BJ (cell line): ENCODE measurements at regions of chr19 and their contacts with region 1.

Region 1: DNA sequence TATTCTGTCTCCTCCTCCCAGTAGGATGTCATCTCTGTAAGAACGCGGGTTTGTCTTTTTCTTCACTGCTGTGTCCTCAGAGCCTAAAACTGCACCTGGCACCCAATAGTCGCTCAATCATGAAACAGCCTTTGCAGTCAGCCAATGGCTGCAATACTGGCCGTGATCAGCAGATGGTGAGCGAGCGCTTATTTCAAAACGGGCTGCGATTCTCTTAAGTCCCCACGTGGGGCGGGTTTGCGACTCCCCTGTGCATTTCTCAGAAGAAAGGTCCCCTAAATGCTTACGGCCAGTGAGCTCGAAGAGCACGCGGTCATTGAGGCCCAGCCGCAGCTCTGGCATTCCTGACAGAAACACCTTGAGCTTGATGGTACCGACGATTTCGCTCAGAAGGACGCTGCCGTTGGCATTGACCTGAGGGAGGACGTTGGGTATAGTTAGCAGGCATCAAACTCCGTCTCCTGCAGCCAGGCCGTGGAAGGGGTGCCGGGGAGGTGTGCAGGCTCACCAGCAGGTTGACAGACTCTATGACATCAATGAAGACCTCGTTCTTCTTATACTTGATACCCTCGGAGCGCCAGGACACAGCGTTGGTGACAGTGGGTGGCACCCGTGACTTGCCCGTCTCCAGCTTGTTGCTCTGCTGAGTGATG is 6.0 kb downstream of the AP1M2 start:
- DNase-seq: peak; percentile 46
- H3K4me3 ChIP-seq: no peak overlapping the region
- H3K27me3 ChIP-seq: no peaks in the 10 kb centered on the region
- CTCF ChIP-seq: peak; percentile 97

Region 2: GRCh38 chr19:10565567-10566407 is 15.3 kb before region 1 on chr19 and contains the start of gene KRI1:
- CTCF ChIA-PET with region 1: interaction called, 10 read pairs
- POLR2A ChIA-PET with region 1: no interaction called
- DNase-seq: peak; percentile 84
- H3K4me3 ChIP-seq: peak within 1 kb of the TSS; percentile 99
- H3K27me3 ChIP-seq: no peaks in the 10 kb centered on the region
- CTCF ChIP-seq: peak; percentile 27
- polyA plus RNA-seq, gene KRI1: 8.4 and 10.0 TPM in 2 replicates

Region 3: DNA sequence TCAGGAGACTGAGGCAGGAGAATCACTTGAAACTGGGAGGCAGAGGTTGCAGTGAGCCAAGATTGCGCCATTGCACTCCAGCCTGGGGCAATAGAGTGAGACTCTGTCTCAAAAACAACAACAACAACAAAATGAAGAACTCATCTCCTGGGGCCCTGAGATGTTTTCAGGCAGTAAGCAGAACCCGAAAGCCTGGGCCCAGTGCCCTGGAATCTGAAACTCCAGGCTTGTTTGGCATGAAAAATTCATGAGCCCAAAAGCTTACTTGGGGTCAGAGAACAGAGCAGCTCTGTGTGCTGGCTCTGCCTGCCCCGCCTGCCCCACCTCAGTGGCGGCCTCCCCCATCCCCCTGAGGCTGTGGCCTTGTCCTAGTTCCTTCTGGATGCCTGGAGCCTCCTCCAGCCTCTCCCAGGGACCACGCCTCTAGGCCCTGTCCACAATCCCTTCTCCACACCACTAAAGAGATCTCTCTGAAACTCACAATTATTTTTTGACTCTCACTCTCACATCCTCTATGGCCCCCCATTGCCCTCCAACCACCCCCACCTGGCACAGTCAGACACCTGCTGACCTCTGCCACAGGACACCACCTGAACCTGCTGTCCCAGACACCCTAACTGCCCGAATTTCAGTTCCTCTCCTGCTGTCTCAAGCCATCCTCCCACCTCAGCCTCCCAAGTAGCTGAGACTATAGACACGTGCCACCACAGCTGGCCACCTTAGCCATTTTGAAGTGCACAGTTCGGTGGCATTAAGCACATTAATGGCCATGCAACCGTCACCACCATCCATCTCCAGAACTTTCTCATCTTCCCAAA is 12.9 kb after region 1 on chr19:
- CTCF ChIA-PET with region 1: interaction called, 54 read pairs
- POLR2A ChIA-PET with region 1: no interaction called
- DNase-seq: no peak
- H3K4me3 ChIP-seq: no peak overlapping the region
- H3K27me3 ChIP-seq: no peaks in the 10 kb centered on the region; the same call in 1 of the 2 replicates
- CTCF ChIP-seq: no peak

Region 4: GRCh38 chr19:10618846-10619245 is 37.7 kb after region 1 on chr19:
- CTCF ChIA-PET with region 1: interaction called, 14 read pairs
- POLR2A ChIA-PET with region 1: no interaction called
- DNase-seq: no peak
- H3K4me3 ChIP-seq: no peak overlapping the region
- H3K27me3 ChIP-seq: no peaks in the 10 kb centered on the region
- CTCF ChIP-seq: no peak

Region 5: DNA sequence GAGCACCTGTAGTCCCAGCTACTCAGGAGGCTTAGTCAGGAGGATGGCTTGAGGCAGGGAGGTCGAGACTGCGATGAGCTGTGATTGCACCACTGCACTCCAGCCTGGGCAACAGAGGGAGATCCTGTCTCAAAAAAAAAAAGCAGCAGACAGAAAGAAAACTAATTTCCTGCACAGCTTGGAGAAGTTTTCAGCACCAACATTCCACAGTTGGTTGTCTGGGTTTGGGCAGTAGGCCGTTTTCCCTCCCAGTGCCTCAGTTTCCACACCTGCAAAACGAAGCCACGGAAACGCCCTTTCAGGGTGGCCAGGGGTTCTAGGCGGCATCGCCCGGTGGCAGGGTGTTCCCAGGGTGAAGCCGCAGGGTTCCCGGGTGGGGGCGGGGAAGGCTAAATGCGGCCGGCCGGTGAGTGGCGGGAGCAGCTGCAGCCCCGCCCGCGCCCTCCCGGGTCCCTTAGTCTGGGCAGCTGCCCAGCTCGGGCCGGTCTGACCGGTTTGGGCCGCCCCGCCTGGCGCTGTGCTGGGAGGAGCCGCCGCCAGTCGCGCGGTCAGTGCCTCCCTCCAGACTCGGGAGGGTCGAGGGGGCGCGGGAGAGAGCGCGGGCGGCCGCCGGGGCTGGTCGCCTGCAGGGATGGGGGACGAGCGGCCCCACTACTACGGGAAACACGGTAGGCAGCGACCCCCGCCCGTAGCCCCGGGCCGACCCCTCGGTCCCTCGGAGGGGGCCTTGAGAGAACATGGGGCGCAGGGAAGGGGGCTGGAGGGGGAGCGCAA is 44.1 kb after region 1 on chr19 and contains the start of gene SLC44A2:
- CTCF ChIA-PET with region 1: interaction called, 14 read pairs
- POLR2A ChIA-PET with region 1: no interaction called
- DNase-seq: no peak
- H3K4me3 ChIP-seq: peak within 1 kb of the TSS; percentile 65
- H3K27me3 ChIP-seq: no peaks in the 10 kb centered on the region
- CTCF ChIP-seq: no peak
- polyA plus RNA-seq, gene SLC44A2: 78.0 and 114 TPM in 2 replicates

Region 6: DNA sequence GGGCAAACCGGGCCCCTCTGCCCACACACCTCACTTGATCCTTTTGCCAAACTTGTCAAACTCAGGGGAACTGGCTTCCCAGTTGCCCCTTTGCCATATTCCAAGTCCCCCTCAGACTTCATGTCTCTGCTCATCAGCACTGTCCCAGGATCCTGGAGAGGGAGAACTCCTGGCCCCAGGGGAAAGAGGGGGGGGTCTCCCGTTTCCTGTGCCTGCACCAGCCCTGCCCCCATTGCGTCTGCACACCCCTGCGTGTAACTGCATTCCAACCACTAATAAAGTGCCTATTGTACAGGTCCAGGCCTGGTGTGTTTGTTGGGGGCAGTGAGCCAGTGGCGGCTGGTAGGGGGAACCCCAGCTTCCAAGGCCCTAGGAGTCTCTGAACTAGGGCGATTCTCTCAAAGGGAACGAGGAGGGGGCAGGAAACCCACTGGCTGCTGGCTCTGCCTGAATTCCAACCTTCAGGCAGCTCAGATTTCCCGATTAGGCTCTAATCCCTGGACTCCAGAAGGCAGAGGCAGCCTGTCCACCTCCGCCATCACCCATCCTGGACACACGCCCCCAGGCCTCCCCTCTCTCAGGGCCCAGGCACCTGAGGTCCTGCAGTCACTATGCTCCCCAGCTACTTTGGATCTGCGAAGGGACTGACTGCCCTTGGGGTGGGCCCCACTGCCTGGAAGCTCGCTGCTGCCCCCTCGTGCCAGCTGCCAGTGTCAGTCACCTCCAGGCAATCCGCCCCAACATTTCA is 63.3 kb after region 1 on chr19:
- CTCF ChIA-PET with region 1: interaction called, 374 read pairs
- POLR2A ChIA-PET with region 1: no interaction called
- DNase-seq: no peak
- H3K4me3 ChIP-seq: no peak overlapping the region
- H3K27me3 ChIP-seq: no peaks in the 10 kb centered on the region
- CTCF ChIP-seq: peak; percentile 93

Region 7: GRCh38 chr19:10695401-10696398 is 114.6 kb after region 1 on chr19:
- CTCF ChIA-PET with region 1: interaction called, 115 read pairs
- POLR2A ChIA-PET with region 1: no interaction called
- DNase-seq: peak; percentile 69
- H3K4me3 ChIP-seq: no peak overlapping the region
- H3K27me3 ChIP-seq: no peaks in the 10 kb centered on the region
- CTCF ChIP-seq: no peak

Region 8: DNA sequence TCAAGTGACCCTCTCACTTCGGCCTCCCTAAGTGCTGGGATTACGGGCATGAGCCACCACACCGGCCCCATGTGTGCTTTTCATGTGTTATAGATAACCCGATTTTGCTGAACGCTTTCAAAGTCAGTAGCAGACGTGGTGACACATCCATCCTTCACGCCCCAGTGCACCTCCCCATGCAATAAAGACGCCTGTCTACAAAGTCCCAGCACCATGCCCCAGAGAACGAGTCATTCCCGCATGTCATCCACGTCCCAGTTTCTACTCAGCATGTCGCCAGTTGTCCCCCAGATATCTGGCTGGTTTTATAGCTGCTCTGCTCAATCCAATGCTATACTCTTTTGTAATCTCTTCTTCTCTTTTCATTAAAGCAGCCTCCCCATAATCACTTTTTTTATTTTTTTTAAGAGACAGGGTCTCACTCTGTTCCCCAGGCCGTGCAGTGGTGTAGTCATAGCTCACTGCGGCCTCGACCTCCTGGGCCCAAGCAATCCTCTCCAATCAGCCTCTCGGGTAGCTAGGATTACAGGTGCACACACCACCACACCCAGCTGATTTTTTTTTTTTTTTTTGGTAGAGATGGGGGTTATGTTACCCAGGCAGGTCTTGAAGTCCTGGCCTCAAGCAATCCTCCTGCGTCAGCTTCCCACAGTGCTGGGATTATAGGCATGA is 179.3 kb after region 1 on chr19:
- CTCF ChIA-PET with region 1: no interaction called
- POLR2A ChIA-PET with region 1: no interaction called
- DNase-seq: no peak
- H3K4me3 ChIP-seq: no peak overlapping the region
- H3K27me3 ChIP-seq: no peaks in the 10 kb centered on the region
- CTCF ChIP-seq: no peak